B cell (primary cell): ENCODE measurements at regions of chr17 and their contacts with region 1.

Region 1: DNA sequence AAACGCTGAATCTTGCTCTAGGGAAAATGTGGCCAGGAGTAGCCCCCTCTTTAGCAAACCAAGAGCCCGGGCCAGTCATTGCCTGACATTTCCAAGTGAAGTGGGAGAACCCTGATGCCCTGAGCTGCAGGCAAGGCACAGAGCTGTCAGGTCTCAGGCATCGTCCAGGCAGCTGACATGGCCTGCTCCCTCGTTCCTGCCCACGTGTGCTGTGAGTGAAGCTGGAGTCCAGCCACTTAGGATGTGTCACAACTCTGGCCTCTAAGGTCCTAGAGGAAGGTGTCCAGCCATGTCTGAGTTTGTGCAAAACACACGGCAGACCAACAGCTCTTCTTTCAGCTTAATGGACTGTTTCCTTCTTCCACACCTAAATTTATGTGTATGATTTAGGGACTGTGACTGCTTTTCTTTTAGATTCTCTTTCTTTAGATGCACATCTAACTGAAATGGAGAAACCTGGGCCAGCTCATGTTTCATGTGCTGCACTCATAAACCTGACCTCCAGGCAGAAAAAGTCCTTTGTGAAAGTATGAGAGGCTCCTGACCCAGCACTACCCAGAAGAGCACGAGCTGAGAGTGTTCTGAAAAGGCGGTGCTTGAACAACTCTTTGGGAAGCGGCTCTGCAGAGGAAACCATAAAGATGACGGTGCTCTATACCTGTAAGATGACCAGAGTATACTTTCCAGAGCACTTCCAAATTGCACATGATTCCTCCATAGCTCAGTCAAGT is 14.8 kb upstream of the LIMD2 start:
- DNase-seq: no peak
- ATAC-seq: no peak
- H3K4me3 ChIP-seq: no peak overlapping the region
- H3K4me3 Mint-ChIP-seq: no peak overlapping the region
- H3K27ac ChIP-seq: no peak overlapping the region
- H3K27ac Mint-ChIP-seq: no peak overlapping the region
- H3K4me1 ChIP-seq: peaks cover 6 to 8% of the 10 kb centered on the region in 2 donors
- H3K4me1 Mint-ChIP-seq: peaks cover 8% of the 10 kb centered on the region
- H3K27me3 ChIP-seq: no peaks in the 10 kb centered on the region
- H3K27me3 Mint-ChIP-seq: no peaks in the 10 kb centered on the region
- CTCF ChIP-seq: no peak

Region 2: DNA sequence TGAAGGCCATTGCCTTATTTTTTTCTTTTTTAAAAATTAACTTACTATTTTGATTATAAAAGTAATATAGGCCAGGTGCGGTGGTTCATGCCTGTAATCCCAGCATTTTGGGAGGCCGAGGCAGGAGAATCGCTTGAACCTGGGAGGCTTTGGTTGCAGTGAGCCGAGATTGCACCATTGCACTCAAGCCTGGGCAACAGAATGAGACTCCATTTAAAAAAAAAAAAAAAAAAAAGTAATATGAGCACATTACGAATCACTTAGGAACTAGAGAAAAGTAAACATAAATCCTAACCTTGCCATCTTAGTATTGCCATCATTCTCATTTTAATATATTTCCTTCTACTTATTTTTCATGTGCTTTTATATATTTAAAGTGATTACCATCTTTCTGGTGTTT is 126.9 kb before region 1 on chr17:
- CTCF ChIA-PET with region 1: no interaction called
- POLR2A ChIA-PET with region 1: no interaction called
- intact Hi-C with region 1: no loop called
- DNase-seq: no peak
- ATAC-seq: no peak
- H3K4me3 ChIP-seq: no peak overlapping the region
- H3K4me3 Mint-ChIP-seq: no peak overlapping the region
- H3K27ac ChIP-seq: no peak overlapping the region
- H3K27ac Mint-ChIP-seq: no peak overlapping the region
- H3K4me1 ChIP-seq: no peaks in the 10 kb centered on the region
- H3K4me1 Mint-ChIP-seq: no peaks in the 10 kb centered on the region
- H3K27me3 ChIP-seq: no peaks in the 10 kb centered on the region
- H3K27me3 Mint-ChIP-seq: no peaks in the 10 kb centered on the region
- CTCF ChIP-seq: no peak

Region 3: DNA sequence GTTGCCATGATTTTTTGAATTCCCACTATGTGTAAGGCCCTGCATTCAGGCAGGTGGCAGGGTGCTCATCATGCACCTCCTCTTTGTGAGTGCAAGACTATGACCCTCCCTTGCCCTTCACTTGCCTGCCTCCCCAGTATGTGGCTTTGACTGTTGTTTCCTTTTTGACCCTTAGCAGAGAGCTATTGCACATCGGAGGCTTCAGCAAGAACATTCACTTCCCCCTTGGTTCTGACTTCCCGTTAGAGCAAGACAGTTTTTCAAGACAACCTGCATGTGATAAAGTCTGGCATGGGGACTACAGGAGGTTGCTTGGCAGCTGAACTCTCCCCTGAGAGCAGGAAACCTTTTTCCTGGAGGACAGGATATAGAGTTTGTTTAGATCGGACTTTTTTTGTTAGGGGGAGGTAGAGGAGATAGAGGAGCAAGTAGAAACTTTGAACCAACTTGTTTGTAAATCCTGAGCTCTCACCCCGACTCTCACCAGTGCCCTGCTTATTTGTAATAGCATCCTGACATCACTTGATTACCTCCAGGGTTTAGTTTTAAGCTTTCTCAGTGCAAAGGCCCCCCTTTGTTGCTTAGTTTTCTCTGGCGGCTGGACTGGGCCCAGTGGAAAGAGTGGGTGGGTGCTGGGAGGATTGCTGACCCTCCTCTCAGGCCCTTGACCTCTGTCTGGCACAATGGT is 49.0 kb before region 1 on chr17:
- CTCF ChIA-PET with region 1: interaction called, 10 read pairs
- POLR2A ChIA-PET with region 1: no interaction called
- intact Hi-C with region 1: no loop called
- DNase-seq: peak; percentile 66
- ATAC-seq: peak; percentile 84
- H3K4me3 ChIP-seq: no peak overlapping the region
- H3K4me3 Mint-ChIP-seq: peak overlapping the region; percentile 77
- H3K27ac ChIP-seq: peak overlapping the region; percentile 71 to 76
- H3K27ac Mint-ChIP-seq: peak overlapping the region; percentile 96
- H3K4me1 ChIP-seq: peaks cover 28 to 40% of the 10 kb centered on the region in 2 donors
- H3K4me1 Mint-ChIP-seq: peaks cover 37% of the 10 kb centered on the region
- H3K27me3 ChIP-seq: no peaks in the 10 kb centered on the region
- H3K27me3 Mint-ChIP-seq: no peaks in the 10 kb centered on the region
- CTCF ChIP-seq: no peak

Region 4: DNA sequence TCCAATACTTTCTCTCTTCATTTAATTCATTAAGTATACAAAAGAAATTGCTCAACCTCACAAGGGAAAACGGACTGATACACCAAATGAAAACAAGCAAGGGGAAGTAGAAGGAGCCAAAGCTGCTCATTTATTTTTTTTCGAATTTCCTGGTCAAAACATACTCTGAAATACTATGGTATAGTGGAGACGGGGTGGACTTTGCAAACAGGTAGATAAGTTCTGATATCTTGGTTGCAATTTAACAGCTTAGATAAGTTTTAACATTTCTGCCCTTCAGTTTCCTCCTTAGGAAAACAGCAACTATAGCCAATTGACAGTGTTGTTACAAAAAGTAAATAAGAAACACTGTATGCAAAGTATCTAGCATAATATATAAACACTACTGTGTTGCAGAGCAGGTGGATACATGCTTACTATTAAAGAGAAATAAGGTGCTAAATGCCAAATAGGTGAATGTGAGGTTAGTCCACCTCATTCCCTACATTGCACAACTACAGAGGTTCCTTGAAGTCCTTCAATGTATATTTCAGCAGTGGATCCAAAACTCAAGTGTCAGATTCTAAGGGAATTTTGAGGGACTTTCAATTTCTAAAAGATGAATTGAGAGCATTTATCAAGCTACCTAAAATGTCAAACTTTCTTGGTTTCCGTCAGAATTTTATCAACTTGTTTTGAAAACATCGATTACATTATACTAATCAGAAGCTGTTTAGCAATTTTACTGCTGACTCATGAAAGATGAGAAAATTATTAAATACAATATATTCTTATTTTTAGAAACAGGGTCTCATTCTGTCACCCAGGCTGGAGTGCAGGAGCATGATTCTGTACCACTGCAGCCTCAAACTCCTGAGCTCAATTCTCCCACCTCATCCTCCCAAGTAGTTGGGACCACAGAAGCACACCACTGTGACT is 47.7 kb after region 1 on chr17:
- CTCF ChIA-PET with region 1: no interaction called
- POLR2A ChIA-PET with region 1: no interaction called
- intact Hi-C with region 1: no loop called
- DNase-seq: no peak
- ATAC-seq: no peak
- H3K4me3 ChIP-seq: no peak overlapping the region
- H3K4me3 Mint-ChIP-seq: no peak overlapping the region
- H3K27ac ChIP-seq: peak overlapping the region in 1 of 2 donors; percentile 46
- H3K27ac Mint-ChIP-seq: peak overlapping the region; percentile 12
- H3K4me1 ChIP-seq: peaks cover 12 to 15% of the 10 kb centered on the region in 2 donors
- H3K4me1 Mint-ChIP-seq: peaks cover 35% of the 10 kb centered on the region
- H3K27me3 ChIP-seq: no peaks in the 10 kb centered on the region
- H3K27me3 Mint-ChIP-seq: no peaks in the 10 kb centered on the region
- CTCF ChIP-seq: no peak